Vagina (tissue), 2 donors: ENCODE measurements at regions of chr20 and their contacts with region 1.

Region 1: GRCh38 chr20:59087829-59088433 is 45.3 kb upstream of the PRELID3B start:
- DNase-seq: no peak
- H3K4me3 ChIP-seq: no peak overlapping the region
- H3K27ac ChIP-seq: no peak overlapping the region
- H3K4me1 ChIP-seq: no peaks in the 10 kb centered on the region
- H3K27me3 ChIP-seq: no peaks in the 10 kb centered on the region
- CTCF ChIP-seq: peak; percentile 75 to 84 (median 81)
- POLR2A ChIP-seq: no peak

Region 2: GRCh38 chr20:59222253-59223181 is 134.6 kb after region 1 on chr20:
- intact Hi-C with region 1: loop called (anchors 5 kb)
- DNase-seq: no peak
- H3K4me3 ChIP-seq: peak overlapping the region; percentile 52 to 67
- H3K27ac ChIP-seq: peak overlapping the region; percentile 67
- H3K4me1 ChIP-seq: peaks cover 23% of the 10 kb centered on the region
- H3K27me3 ChIP-seq: no peaks in the 10 kb centered on the region
- CTCF ChIP-seq: peak; percentile 66 to 96 (median 73)
- POLR2A ChIP-seq: no peak